ENCODE measurements at regions of chr6 and their contacts with region 1.

Region 1: GRCh38 chr6:43838276-43839036 is 68.4 kb downstream of the VEGFA start:
- DNase-seq: peak; percentile 41
- H3K4me3 ChIP-seq: no peak overlapping the region
- CTCF ChIP-seq: peak; percentile 43

Region 2: DNA sequence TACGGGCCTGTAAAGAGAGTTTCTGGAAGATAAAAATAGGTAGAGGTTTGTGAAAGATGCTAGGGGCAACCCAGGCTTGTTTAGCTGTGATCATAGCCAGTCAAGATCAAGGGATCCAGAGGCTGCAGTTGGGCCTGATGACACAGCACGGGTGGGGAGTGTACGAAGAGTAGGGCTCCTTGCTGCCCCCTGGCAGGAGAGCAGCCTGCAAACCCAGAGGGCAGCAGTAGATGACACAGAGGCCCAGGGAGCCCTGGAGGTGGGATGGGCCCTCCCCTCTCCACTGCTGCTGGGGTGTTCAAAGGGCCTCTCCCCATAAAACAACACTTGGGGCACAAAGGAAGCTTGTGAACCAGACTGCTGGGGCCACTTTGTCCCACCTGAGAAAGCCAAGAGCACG is 21.3 kb before region 1 on chr6:
- CTCF ChIA-PET with region 1: interaction called, 19 read pairs
- POLR2A ChIA-PET with region 1: no interaction called
- DNase-seq: no peak
- H3K4me3 ChIP-seq: no peak overlapping the region
- CTCF ChIP-seq: peak; percentile 40

Region 3: DNA sequence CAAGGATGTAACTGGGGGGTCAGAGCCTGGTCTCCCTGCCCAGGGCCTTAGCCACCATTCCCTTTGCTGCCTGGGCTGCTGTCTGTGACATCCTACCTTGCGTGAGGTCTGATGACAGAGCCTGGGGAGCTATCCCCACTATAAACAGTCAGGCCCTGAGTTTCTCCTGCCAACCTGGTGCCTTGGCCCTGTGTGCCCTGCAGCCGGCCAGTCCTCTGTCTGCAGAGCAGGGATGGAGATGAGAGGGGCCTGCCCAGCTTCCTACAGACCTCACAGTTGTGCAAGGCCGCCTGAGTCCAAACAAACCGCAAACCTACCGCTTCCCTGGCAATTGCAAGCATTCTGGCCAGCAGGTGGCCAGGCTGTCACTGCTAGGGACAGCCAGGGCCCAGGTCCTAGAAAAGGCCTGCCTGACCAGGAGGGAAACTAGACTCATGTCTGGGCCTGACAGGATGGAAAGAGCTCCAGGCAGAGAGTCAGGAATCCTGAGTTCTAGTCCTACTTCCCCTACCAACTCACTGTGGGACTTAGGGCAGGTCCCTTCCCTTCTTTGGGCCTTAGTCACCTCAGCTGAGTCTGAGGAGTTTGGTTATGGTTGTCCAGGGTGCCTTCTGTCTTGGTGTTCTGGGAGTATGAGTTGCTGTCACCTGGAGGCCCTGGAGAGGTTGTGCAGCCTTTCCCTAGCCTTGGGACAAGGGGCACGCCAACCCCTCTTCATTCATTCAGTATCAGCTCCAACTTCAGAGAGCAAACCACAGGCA is 17.7 kb after region 1 on chr6:
- CTCF ChIA-PET with region 1: interaction called, 10 read pairs
- POLR2A ChIA-PET with region 1: no interaction called
- DNase-seq: no peak
- H3K4me3 ChIP-seq: no peak overlapping the region
- CTCF ChIP-seq: peak; percentile 40

Region 4: GRCh38 chr6:44316481-44316880 is 478.0 kb after region 1 on chr6:
- CTCF ChIA-PET with region 1: no interaction called
- POLR2A ChIA-PET with region 1: no interaction called
- DNase-seq: no peak
- H3K4me3 ChIP-seq: no peak overlapping the region
- CTCF ChIP-seq: no peak

Measured in AG04449 (cell line).